Ovary (tissue), 10 donors: ENCODE measurements at regions of chr16 and their contacts with region 1.

Region 1: GRCh38 chr16:77788181-77789084 is at the start of gene VAT1L:
- DNase-seq: no peak
- H3K4me3 ChIP-seq: peak within 1 kb of the TSS; percentile 28
- H3K27ac ChIP-seq: no peak within 1 kb of the TSS
- H3K4me1 ChIP-seq: peaks cover 2% of the 10 kb centered on the region
- H3K27me3 ChIP-seq: no peaks in the 10 kb centered on the region
- CTCF ChIP-seq: no peak
- EP300 ChIP-seq: no peak
- POLR2A ChIP-seq: no peak
- total RNA-seq, gene VAT1L: 0.05 to 0.57 (median 0.23) TPM

Region 2: GRCh38 chr16:77684181-77684526 is 104.3 kb before region 1 on chr16:
- intact Hi-C with region 1: no loop called
- DNase-seq: no peak
- H3K4me3 ChIP-seq: no peak overlapping the region
- H3K27ac ChIP-seq: no peak overlapping the region
- H3K4me1 ChIP-seq: no peaks in the 10 kb centered on the region
- H3K27me3 ChIP-seq: no peaks in the 10 kb centered on the region
- CTCF ChIP-seq: no peak
- EP300 ChIP-seq: no peak
- POLR2A ChIP-seq: no peak

Region 3: GRCh38 chr16:77840673-77841501 is 52.5 kb after region 1 on chr16:
- intact Hi-C with region 1: loop called in 1 of 4 experiments (anchors 10 kb)
- DNase-seq: no peak
- H3K4me3 ChIP-seq: no peak overlapping the region
- H3K27ac ChIP-seq: no peak overlapping the region
- H3K4me1 ChIP-seq: no peaks in the 10 kb centered on the region
- H3K27me3 ChIP-seq: no peaks in the 10 kb centered on the region
- CTCF ChIP-seq: no peak
- EP300 ChIP-seq: no peak
- POLR2A ChIP-seq: no peak